Mammary epithelial cell (primary cell): ENCODE measurements at regions of chr11 and their contacts with region 1.

Region 1: DNA sequence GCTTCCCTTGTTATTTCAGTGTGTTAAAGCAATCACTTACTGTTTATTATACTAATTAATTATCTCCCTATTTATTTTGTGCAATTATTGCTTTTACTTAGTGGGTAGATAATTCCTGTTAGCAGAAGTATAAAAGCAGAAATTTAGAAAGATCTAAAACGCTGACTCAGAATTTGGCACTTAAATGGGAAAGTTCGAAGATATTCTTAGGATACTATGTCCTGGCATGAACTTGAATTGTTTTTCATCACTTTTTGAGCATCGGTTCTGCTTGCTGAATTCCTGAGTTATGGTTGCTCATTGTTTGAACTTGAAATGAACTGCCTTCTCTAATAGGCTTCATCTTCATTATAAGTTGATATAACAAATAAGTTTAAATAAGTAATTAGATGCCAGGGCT is 325.4 kb downstream of the JRKL start:
- DNase-seq: no peak
- H3K4me3 ChIP-seq: no peak overlapping the region
- H3K27ac ChIP-seq: no peak overlapping the region
- H3K4me1 ChIP-seq: no peaks in the 10 kb centered on the region
- H3K27me3 ChIP-seq: no peaks in the 10 kb centered on the region
- CTCF ChIP-seq: no peak

Region 2: GRCh38 chr11:96652516-96652915 is 62.7 kb before region 1 on chr11:
- CTCF ChIA-PET with region 1: no interaction called
- dilution Hi-C with region 1: loop called (anchors 5 kb)
- in situ Hi-C with region 1: no loop called
- intact Hi-C with region 1: no loop called
- DNase-seq: no peak
- H3K4me3 ChIP-seq: no peak overlapping the region
- H3K27ac ChIP-seq: no peak overlapping the region
- H3K4me1 ChIP-seq: no peaks in the 10 kb centered on the region
- H3K27me3 ChIP-seq: no peaks in the 10 kb centered on the region
- CTCF ChIP-seq: no peak

Region 3: DNA sequence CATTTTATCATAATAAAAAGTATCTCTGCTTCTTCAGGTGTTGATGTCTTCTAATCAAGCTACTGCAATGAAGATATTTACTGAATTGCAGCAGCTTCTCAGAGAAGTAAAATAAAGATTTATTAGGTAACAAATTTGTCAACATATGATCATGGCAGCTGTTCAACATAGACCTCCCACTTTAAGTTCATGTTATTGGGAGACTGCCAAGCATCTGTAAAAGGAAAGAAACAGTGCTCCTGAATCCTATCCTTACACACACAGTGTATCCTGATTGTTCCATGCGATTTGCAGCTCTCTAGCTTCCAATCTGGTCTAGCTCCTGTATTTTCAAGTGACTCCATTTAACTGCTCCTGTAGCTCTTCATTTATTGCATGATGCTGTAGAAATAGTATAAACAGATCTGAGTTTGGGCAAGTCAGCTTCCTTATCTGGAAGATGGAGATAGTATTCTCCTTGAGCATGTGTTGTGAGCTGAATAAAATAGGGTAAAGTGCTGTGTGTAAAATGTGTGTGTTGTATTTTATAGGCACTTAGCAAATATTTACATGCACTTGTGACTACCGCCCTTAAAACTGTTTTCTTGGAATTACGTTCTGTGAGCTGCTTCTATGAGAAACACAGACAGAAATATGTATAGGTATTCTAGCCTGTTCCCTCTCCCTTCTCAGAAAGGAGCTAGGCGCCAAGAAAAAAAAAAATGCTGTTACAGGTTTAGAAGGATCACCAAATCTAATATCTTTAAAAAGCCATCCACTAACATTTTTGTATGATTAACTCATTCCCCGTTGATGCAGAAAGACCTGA is 34.8 kb before region 1 on chr11:
- CTCF ChIA-PET with region 1: no interaction called
- dilution Hi-C with region 1: no loop called
- in situ Hi-C with region 1: no loop called
- intact Hi-C with region 1: no loop called
- DNase-seq: no peak
- H3K4me3 ChIP-seq: no peak overlapping the region
- H3K27ac ChIP-seq: no peak overlapping the region
- H3K4me1 ChIP-seq: no peaks in the 10 kb centered on the region
- H3K27me3 ChIP-seq: no peaks in the 10 kb centered on the region
- CTCF ChIP-seq: no peak